Panc1 (cell line): ENCODE measurements at regions of chr16 and their contacts with region 1.

Region 1: DNA sequence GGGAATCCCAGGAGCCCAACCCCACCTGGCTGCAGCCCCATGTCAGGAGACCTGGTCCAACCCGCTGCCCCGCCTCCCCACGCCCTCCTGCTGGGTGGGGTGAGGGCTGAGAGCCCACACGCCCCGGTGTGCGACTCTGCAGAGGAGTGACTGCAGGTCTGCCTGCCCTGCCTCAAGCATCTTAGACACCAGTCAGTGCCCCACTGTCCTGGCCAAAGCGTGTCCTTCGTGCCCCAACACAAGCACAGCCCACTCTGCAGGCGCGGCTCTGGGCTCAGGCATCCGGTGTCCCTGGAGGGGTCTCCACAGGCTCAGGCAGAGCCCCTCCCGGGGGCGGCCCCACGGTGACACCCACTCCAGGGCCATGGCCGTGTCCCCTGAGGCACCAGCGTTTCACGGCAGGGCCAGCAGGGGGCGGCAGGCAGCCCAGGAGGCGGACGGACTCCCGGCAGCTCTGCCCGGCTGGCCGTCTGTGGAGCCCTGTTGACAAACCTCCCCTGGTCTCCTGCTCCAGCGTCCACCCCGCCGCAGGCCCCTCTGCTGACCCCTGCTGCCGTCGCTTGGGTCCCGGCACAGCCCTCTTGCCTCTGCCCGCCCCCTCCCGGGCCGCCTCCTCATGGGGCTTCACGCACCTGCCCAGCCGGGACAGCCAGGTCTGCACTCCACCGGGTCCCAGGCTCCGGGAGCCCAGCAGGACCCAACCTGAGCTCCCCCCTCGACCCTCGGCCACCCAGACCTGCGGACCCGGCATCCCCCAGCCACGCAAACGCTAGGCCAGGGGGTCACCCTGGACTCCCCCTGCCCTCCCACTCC is 8.6 kb upstream of the UBE2I start:
- DNase-seq: no peak
- ATAC-seq: peak; percentile 87
- H3K4me3 ChIP-seq: peak overlapping the region; percentile 12 to 26; a peak in 1 of 4 replicates
- H3K27ac ChIP-seq: no peak overlapping the region
- H3K4me1 ChIP-seq: peaks cover 19% of the 10 kb centered on the region
- H3K27me3 ChIP-seq: no peaks in the 10 kb centered on the region
- CTCF ChIP-seq: peak; percentile 98

Region 2: DNA sequence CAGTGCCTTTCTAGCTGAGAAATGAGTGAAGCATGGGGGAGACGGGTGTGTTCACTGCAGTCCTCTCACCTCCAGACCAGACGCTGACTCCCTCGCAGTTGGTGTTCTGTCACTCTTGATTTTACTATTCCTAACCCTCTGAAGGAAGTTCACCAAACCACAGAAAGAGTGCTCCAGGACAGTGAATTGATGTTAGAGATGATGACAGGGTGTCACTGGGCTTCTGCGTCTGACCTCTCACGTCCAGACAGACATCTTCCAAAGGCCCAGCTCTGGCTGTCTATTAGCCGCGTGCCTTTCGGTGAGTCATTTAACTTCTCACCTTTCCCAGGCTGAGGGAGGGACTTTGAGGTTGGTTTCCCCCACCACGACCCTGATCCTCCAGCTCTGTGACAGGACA is 319.5 kb after region 1 on chr16:
- CTCF ChIA-PET with region 1: interaction called, 13 read pairs
- POLR2A ChIA-PET with region 1: no interaction called
- in situ Hi-C with region 1: no loop called
- intact Hi-C with region 1: no loop called
- DNase-seq: no peak
- ATAC-seq: no peak
- H3K4me3 ChIP-seq: no peak overlapping the region
- H3K27ac ChIP-seq: no peak overlapping the region
- H3K4me1 ChIP-seq: peaks cover 6% of the 10 kb centered on the region
- H3K27me3 ChIP-seq: no peaks in the 10 kb centered on the region
- CTCF ChIP-seq: no peak